CD4-positive, alpha-beta memory T cell (primary cell): ENCODE measurements at regions of chr17 and their contacts with region 1.

Region 1: DNA sequence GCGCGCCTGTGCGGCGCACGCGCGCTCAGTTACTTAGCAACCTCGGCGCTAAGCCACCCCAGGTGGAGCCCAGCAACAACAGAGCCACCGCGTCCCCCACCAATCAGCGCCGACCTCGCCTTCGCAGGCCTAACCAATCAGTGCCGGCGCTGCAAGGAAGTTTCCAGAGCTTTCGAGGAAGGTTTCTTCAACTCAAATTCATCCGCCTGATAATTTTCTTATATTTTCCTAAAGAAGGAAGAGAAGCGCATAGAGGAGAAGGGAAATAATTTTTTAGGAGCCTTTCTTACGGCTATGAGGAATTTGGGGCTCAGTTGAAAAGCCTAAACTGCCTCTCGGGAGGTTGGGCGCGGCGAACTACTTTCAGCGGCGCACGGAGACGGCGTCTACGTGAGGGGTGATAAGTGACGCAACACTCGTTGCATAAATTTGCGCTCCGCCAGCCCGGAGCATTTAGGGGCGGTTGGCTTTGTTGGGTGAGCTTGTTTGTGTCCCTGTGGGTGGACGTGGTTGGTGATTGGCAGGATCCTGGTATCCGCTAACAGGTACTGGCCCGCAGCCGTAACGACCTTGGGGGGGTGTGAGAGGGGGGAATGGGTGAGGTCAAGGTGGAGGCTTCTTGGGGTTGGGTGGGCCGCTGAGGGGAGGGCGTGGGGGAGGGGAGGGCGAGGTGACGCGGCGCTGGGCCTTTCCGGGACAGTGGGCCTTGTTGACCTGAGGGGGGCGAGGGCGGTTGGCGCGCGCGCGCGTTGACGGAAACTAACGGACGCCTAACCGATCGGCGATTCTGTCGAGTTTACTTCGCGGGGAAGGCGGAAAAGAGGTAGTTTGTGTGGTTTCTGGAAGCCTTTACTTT is at the start of gene UBB:
- DNase-seq: peak; percentile 93 to 98 (median 97)
- H3K4me3 ChIP-seq: peak within 1 kb of the TSS; percentile 72 to 94
- H3K4me3 Mint-ChIP-seq: peak within 1 kb of the TSS; percentile 86 to 99 (median 94)
- H3K27ac ChIP-seq: peak within 1 kb of the TSS; percentile 91
- H3K27ac Mint-ChIP-seq: peak within 1 kb of the TSS; percentile 94 to 100 (median 99)
- H3K4me1 ChIP-seq: peaks cover 25% of the 10 kb centered on the region
- H3K4me1 Mint-ChIP-seq: peaks cover 28 to 49% (median 39%) of the 10 kb centered on the region in 4 donors
- H3K27me3 ChIP-seq: no peaks in the 10 kb centered on the region
- H3K27me3 Mint-ChIP-seq: peaks cover 0 to 4% of the 10 kb centered on the region in 2 donors
- total RNA-seq, gene UBB: 523 to 560 TPM

Region 2: DNA sequence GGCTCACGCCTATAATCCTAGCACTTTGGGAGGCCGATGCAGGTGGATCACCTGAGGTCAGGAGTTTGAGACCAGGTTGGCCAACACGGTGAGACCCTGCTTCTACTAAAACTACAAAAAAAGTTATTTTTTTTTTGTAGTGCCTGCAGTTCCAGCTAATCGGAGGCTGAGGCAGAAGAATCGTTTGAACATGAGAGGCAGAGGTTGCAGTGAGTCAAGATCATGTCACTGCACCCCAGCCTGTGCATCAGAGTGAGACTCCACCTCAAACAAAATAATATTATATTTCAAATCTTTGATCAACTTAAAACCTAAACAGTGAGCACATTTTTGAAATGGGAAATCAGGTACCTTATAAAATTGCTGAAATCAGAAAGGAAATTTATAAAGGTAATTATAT is 202.0 kb before region 1 on chr17:
- CTCF ChIA-PET with region 1: no interaction called
- POLR2A ChIA-PET with region 1: no interaction called
- intact Hi-C with region 1: no loop called
- DNase-seq: no peak
- H3K4me3 ChIP-seq: no peak overlapping the region
- H3K4me3 Mint-ChIP-seq: no peak overlapping the region
- H3K27ac ChIP-seq: no peak overlapping the region
- H3K27ac Mint-ChIP-seq: no peak overlapping the region
- H3K4me1 ChIP-seq: peaks cover 2% of the 10 kb centered on the region
- H3K4me1 Mint-ChIP-seq: peaks cover 13 to 53% (median 34%) of the 10 kb centered on the region in 4 donors
- H3K27me3 ChIP-seq: no peaks in the 10 kb centered on the region
- H3K27me3 Mint-ChIP-seq: no peaks in the 10 kb centered on the region

Region 3: DNA sequence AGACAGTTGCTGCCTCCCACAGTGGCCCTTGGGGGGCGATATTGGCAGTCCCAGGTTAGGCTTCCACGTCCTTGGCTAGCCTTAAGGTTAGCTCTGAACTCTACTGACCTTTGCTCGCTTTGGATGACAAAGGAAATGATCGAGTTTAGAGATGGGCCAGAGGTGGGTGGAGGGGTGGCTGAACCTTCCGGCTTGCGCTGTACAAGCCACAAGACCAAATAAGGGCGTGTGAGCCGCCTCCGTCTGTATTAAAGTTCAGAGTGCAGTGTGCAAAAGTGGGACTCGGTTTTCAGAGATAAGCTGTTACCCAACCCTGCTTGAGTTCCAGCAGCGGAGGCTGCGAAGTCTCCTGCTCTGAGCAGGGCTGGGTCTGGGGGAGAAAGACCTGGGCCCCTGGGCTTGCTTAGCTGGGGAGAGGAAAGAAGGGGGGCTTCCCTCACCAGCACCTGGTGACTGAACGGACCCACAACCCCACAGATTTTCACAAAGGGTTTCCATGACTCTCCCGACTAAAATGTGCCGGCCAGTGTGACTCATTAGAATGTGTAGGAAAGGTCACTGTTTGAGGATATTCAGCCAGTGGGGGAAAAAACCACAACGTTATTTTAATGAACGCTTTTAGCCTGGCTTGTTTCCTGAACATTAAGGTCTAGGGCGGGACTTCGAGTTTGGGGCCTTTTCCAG is 94.8 kb before region 1 on chr17:
- CTCF ChIA-PET with region 1: no interaction called
- POLR2A ChIA-PET with region 1: interaction called, 10 read pairs
- intact Hi-C with region 1: no loop called
- DNase-seq: peak; percentile 77 to 88 (median 80)
- H3K4me3 ChIP-seq: peak overlapping the region in 1 of 2 donors; percentile 19
- H3K4me3 Mint-ChIP-seq: peak overlapping the region; percentile 70 to 88 (median 81)
- H3K27ac ChIP-seq: peak overlapping the region; percentile 71
- H3K27ac Mint-ChIP-seq: peak overlapping the region; percentile 97 to 99 (median 99)
- H3K4me1 ChIP-seq: peaks cover 53% of the 10 kb centered on the region
- H3K4me1 Mint-ChIP-seq: peaks cover 48 to 68% (median 51%) of the 10 kb centered on the region in 4 donors
- H3K27me3 ChIP-seq: no peaks in the 10 kb centered on the region
- H3K27me3 Mint-ChIP-seq: no peaks in the 10 kb centered on the region

Region 4: DNA sequence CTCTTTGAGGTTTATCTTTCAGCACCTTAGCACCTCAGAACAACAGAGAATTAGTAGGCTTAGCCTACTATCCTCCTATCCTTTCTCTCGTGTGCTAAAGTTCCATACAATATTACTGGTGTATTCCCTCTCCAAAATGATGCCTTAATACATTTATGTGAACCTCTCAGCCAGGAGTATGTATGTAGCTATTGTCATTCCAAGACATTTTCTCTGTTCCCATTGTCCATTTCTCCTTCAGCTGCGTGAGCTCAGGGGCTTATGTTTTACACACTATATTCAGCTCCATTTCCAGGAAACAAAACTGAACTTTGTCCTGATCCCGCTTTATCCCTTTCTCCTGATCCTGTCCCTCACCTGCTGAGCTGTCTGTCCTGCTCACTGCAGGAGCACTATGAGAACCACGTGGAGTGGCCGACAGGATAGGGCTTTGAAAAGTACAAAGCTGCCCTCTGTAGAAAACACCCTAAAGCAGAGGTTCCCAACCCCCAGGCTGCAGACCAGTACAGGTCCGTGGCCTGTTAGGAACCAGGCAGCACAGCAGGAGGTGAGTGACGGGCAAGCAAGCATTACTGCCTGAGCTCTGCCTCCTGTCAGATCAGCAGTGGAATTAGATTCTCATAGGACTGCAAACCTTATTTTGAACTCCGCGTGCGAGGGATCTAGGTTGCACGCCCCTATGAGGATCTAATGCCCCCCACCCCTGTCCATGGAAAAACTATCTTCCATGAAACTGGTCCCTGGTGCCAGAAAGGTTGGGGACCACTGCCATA is 83.3 kb before region 1 on chr17:
- CTCF ChIA-PET with region 1: no interaction called
- POLR2A ChIA-PET with region 1: no interaction called
- intact Hi-C with region 1: no loop called
- DNase-seq: no peak
- H3K4me3 ChIP-seq: no peak overlapping the region
- H3K4me3 Mint-ChIP-seq: no peak overlapping the region
- H3K27ac ChIP-seq: no peak overlapping the region
- H3K27ac Mint-ChIP-seq: peak overlapping the region in 3 of 7 donors; percentile 16 to 61 (median 52)
- H3K4me1 ChIP-seq: peaks cover 15% of the 10 kb centered on the region
- H3K4me1 Mint-ChIP-seq: peaks cover 14 to 32% (median 18%) of the 10 kb centered on the region in 4 donors
- H3K27me3 ChIP-seq: no peaks in the 10 kb centered on the region
- H3K27me3 Mint-ChIP-seq: no peaks in the 10 kb centered on the region

Region 5: GRCh38 chr17:16415031-16415924 is 34.4 kb after region 1 on chr17 and contains the start of gene TRPV2:
- CTCF ChIA-PET with region 1: interaction called, 86 read pairs
- POLR2A ChIA-PET with region 1: interaction called, 129 read pairs
- intact Hi-C with region 1: loop called (anchors 1 kb)
- DNase-seq: peak; percentile 40 to 52 (median 42)
- H3K4me3 ChIP-seq: peak within 1 kb of the TSS; percentile 47 to 79
- H3K4me3 Mint-ChIP-seq: peak within 1 kb of the TSS; percentile 91 to 99 (median 97)
- H3K27ac ChIP-seq: peak within 1 kb of the TSS; percentile 92
- H3K27ac Mint-ChIP-seq: peak within 1 kb of the TSS; percentile 97 to 100 (median 99)
- H3K4me1 ChIP-seq: peaks cover 51% of the 10 kb centered on the region
- H3K4me1 Mint-ChIP-seq: peaks cover 26 to 65% (median 43%) of the 10 kb centered on the region in 4 donors
- H3K27me3 ChIP-seq: no peaks in the 10 kb centered on the region
- H3K27me3 Mint-ChIP-seq: no peaks in the 10 kb centered on the region
- total RNA-seq, gene TRPV2: 95.0 to 101 TPM

Region 6: DNA sequence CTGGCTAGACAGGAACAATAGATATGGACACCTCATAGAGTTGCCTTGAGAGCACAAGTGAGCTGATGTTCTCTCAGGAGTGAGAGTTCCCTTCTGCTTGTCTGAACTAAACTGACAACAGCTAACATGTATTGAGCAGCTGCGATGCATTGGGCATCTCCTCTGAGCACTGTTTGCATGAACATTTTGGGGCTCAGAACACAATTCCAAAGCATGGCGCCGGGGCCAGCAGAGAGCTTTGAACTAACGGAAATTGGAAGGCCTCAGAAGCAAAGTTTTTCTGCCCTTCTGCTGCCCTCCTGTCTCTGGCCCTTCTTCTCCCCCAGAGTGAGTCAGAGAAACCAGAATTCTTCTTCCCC is 72.6 kb after region 1 on chr17:
- CTCF ChIA-PET with region 1: interaction called, 9 read pairs
- POLR2A ChIA-PET with region 1: interaction called, 4 read pairs
- intact Hi-C with region 1: loop called (anchors 5 kb)
- DNase-seq: no peak
- H3K4me3 ChIP-seq: no peak overlapping the region
- H3K4me3 Mint-ChIP-seq: peak overlapping the region in 1 of 8 donors; percentile 9
- H3K27ac ChIP-seq: no peak overlapping the region
- H3K27ac Mint-ChIP-seq: peak overlapping the region in 6 of 7 donors; percentile 25 to 75 (median 59)
- H3K4me1 ChIP-seq: no peaks in the 10 kb centered on the region
- H3K4me1 Mint-ChIP-seq: peaks cover 2 to 18% (median 10%) of the 10 kb centered on the region in 4 donors
- H3K27me3 ChIP-seq: no peaks in the 10 kb centered on the region
- H3K27me3 Mint-ChIP-seq: no peaks in the 10 kb centered on the region